ENCODE measurements at regions of chr18 and their contacts with region 1.

Region 1: DNA sequence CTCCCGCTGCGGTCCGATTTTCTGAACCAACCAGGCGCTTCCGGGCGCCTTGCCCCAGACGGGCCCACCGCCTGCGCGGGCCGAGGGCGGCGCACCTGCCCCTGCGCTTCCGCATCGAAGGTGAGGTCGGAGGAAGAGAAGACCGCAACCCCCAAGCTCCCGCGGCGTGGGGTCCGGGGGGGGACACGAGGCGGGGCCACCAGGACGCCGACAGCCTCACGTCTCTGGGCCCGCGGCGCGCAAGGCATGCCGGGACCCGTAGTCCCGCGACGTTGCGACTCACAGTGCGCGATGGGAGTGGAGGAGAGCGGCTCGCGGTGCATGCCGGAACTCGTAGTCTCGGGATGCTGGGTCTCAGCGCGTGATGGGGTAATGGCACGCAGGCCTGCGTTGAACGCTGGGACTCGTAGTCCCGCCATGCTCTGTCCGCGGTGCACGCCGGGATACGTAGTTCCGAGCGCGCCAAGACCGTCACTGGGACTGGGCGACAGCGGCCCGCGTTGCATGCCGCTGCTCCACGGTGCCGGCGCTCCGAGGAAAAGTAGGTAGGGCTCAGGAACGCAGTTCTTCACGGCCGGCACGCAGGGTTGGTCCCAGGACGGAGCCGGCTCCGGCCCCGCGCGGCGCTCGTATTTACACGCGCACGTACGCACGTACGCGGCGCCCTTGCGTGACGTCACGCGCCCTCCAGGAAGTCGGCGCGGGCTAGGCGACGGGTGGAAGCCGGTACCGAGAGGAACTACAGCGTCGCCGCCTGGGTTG is at the start of gene CTDP1:
- DNase-seq: peak; percentile 99
- H3K4me3 ChIP-seq: peak within 1 kb of the TSS; percentile 69 to 88
- H3K27ac ChIP-seq: peak within 1 kb of the TSS; percentile 98 to 99
- H3K4me1 ChIP-seq: peaks cover 11% of the 10 kb centered on the region
- H3K27me3 ChIP-seq: no peaks in the 10 kb centered on the region
- CTCF ChIP-seq: peak in 2 of 4 experiments; percentile 11 to 16
- POLR2A ChIP-seq: peak; percentile 85
- total RNA-seq, gene CTDP1: 23.0 to 33.6 TPM

Region 2: DNA sequence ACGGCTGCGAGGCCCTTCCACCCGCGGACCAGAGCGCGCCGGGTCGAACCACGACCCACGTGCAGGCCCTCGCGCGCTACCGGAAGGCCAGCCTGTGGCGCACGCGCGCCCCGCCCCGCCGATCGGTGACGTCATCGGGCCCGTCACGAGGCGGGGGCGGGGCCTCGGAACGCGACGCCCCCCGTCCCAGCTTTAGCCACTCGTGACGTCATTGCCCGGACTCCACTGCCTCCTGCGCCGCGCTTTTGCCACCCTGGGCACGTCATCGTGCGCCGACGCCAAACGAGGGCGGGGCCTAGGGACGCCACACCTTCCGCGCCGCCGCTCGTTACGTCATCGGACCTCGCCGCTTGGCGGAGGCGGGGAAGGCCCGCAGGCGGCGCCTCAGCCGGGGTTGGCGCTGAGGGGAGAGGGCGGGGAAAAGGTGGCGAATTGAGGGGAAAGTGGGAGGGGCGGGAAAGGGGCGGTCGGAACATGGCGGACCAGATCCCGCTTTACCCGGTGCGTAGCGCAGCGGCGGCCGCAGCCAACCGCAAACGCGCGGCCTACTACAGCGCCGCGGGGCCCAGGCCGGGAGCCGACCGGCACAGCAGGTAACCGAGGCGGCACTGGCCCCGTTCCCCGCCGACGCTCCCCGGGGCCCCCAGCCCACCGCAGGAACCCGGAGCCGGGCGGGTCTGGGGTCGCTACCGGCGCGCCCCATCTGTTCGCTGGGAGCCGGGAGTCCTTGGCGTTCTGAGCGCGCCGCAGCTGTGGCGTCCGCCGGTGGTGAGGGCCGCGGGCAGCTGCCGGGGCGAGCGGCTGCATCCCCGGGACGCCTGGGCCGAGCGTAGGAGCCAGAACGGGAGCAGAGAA is 610.1 kb before region 1 on chr18 and contains the start of gene ATP9B:
- intact Hi-C with region 1: loop called (anchors 10 kb)
- DNase-seq: peak; percentile 96
- H3K4me3 ChIP-seq: peak within 1 kb of the TSS; percentile 87 to 99
- H3K27ac ChIP-seq: peak within 1 kb of the TSS; percentile 91 to 95
- H3K4me1 ChIP-seq: no peaks in the 10 kb centered on the region
- H3K27me3 ChIP-seq: no peaks in the 10 kb centered on the region
- CTCF ChIP-seq: peak in 3 of 4 experiments; percentile 17 to 61 (median 29)
- POLR2A ChIP-seq: peak; percentile 74
- total RNA-seq, gene ATP9B: 33.8 to 55.6 TPM

Region 3: DNA sequence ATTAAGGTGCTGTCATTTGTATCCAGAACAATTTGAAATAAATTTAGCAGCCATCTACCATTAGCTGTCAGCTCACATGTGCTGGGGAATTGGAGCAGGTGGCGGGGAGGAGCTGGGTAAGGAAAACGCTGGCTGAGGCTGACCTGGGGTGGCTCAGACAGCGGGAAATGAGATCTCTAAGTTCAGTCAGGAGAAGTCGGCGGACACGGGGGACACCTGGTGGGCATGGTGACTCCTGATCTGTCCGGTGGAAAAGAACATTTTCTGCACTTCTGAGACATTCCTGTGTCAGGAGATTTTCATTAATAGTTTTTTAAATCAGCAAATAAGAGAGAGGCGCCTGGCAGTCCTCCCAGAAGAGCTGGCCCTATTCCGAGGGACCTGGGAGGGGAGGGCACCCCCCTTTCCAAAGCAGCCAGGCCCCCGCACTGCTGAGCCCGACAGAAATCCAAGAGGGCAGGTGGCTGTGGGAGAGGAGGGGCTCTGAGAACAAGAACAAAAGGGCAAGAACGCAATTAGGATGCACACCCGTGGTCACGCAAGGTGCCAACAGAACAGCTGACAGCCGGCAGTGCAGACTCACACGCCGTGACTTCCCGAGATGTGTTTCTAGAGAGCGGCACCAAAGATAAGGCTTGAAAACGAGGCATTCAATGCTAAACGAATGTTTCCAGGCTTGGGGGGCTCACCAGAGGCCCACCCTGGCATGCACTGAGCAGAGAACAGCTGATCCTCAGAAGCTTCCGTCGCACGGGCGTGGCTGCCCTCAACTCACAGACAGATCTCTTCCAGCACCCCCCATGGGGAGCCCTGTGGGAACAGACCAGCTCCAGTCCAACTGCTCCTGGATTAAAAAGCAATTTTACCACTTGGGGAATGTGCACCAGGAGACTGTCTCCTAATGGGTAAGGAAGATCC is 245.8 kb after region 1 on chr18:
- intact Hi-C with region 1: no loop called
- DNase-seq: no peak
- H3K4me3 ChIP-seq: no peak overlapping the region
- H3K27ac ChIP-seq: no peak overlapping the region
- H3K4me1 ChIP-seq: peaks cover 5% of the 10 kb centered on the region
- H3K27me3 ChIP-seq: no peaks in the 10 kb centered on the region
- CTCF ChIP-seq: peak in 1 of 4 experiments; percentile 10
- POLR2A ChIP-seq: no peak

Region 4: GRCh38 chr18:79944126-79944741 is 264.9 kb after region 1 on chr18:
- intact Hi-C with region 1: loop called (anchors 10 kb)
- DNase-seq: no peak
- H3K4me3 ChIP-seq: no peak overlapping the region
- H3K27ac ChIP-seq: no peak overlapping the region
- H3K4me1 ChIP-seq: peaks cover 8% of the 10 kb centered on the region
- H3K27me3 ChIP-seq: no peaks in the 10 kb centered on the region
- CTCF ChIP-seq: no peak
- POLR2A ChIP-seq: no peak

Measured in prostate gland (tissue), 2 donors.